Endothelial cell of umbilical vein (primary cell): ENCODE measurements at regions of chrX and their contacts with region 1.

Region 1: DNA sequence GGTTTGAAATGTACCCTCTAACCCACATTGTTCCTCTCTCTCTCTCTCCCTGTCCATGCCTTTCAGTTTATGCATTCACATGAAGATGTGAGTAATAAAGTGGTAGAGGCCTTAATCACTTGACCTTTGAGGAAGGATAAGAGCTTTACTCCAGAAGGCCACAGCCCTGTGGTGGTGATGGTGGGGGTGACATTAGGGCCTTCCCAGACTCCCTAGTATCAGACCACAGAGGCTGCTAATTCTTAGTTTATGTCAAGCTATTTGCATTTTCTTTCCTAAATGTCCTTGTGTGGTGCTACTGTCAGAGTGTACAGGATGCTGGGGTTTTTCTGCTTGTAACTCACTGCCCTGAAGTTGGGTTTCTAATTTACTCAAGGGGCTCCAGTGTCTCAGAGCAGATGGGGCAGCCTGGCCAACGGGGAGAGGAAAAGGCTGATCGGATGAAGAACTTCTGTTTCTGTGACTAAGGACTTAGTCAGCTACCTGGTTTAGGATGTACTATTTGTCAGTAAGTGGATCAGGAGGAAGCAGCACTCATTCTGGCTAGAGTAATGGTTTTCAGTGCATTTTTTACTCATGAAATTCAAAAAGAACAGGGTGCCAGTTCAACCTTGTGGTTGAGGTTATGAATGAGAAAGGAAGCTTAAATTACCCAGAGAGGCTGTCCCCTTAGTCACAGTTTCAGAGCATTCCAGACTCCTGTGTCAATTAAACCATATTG is 509.6 kb upstream of the DIPK2B start:
- DNase-seq: peak; percentile 76
- H3K4me3 ChIP-seq: no peak overlapping the region
- H3K27ac ChIP-seq: peak overlapping the region; percentile 95
- H3K4me1 ChIP-seq: peaks cover 56% of the 10 kb centered on the region
- H3K27me3 ChIP-seq: no peaks in the 10 kb centered on the region
- CTCF ChIP-seq: no peak
- POLR2A ChIP-seq: peak; percentile 46

Region 2: GRCh38 chrX:45196701-45197100 is 513.5 kb before region 1 on chrX:
- CTCF ChIA-PET with region 1: no interaction called
- POLR2A ChIA-PET with region 1: no interaction called
- dilution Hi-C with region 1: no loop called
- intact Hi-C with region 1: loop called (anchors 5 kb)
- DNase-seq: peak; percentile 86
- H3K4me3 ChIP-seq: no peak overlapping the region
- H3K27ac ChIP-seq: peak overlapping the region; percentile 91
- H3K4me1 ChIP-seq: peaks cover 53% of the 10 kb centered on the region
- H3K27me3 ChIP-seq: no peaks in the 10 kb centered on the region
- CTCF ChIP-seq: no peak
- POLR2A ChIP-seq: no peak

Region 3: DNA sequence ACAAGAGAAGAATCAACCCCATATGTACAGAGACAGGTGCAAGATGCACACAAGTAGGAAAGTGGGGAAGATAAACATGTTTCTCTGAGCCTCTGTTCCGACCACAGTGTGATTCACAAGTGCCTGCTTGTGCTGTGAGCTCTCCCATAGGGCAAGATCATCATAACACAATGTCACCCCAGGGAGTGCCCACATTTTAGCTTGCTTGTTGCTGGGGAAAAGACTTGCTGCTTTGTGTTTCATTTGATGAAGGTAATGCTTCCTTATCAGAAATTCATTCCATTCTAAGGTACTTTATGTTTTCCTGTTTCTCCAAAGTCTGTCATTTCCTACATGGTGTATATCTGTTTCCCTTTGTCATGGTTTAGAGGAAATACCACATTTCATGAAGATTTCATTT is 205.0 kb before region 1 on chrX:
- CTCF ChIA-PET with region 1: interaction called, 3 read pairs
- POLR2A ChIA-PET with region 1: no interaction called
- dilution Hi-C with region 1: no loop called
- intact Hi-C with region 1: loop called (anchors 1 kb)
- DNase-seq: peak; percentile 92
- H3K4me3 ChIP-seq: no peak overlapping the region
- H3K27ac ChIP-seq: peak overlapping the region; percentile 96
- H3K4me1 ChIP-seq: peaks cover 35% of the 10 kb centered on the region
- H3K27me3 ChIP-seq: no peaks in the 10 kb centered on the region
- CTCF ChIP-seq: no peak
- POLR2A ChIP-seq: peak; percentile 36

Region 4: DNA sequence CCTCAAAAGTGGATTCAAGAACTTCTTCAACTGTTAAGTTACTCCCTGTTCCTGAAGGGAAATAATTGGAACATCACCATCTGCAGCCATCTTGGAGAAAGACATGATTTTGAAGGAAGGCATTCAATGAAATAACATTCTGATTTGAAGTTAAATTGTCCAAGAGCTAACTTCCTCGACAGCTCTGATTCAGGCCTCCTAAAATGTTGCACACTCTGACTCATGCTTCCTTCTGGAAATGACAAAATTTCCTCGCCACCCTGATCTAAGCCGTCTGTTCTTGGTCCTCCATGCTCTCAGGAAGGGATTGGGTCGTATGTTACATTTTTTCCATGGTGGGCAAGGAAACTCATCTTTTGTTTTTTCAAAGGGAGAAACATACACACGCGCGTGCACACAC is 12.7 kb before region 1 on chrX:
- CTCF ChIA-PET with region 1: interaction called, 13 read pairs
- POLR2A ChIA-PET with region 1: interaction called, 3 read pairs
- dilution Hi-C with region 1: no loop called
- intact Hi-C with region 1: loop called (anchors 1 kb)
- DNase-seq: peak; percentile 94
- H3K4me3 ChIP-seq: no peak overlapping the region
- H3K27ac ChIP-seq: peak overlapping the region; percentile 92
- H3K4me1 ChIP-seq: peaks cover 22% of the 10 kb centered on the region
- H3K27me3 ChIP-seq: no peaks in the 10 kb centered on the region
- CTCF ChIP-seq: no peak
- POLR2A ChIP-seq: no peak

Region 5: GRCh38 chrX:45743081-45743533 is 32.9 kb after region 1 on chrX:
- CTCF ChIA-PET with region 1: interaction called, 11 read pairs
- POLR2A ChIA-PET with region 1: interaction called, 5 read pairs
- dilution Hi-C with region 1: no loop called
- intact Hi-C with region 1: no loop called
- DNase-seq: peak; percentile 61
- H3K4me3 ChIP-seq: no peak overlapping the region
- H3K27ac ChIP-seq: no peak overlapping the region
- H3K4me1 ChIP-seq: no peaks in the 10 kb centered on the region
- H3K27me3 ChIP-seq: no peaks in the 10 kb centered on the region
- CTCF ChIP-seq: peak; percentile 32 to 35
- POLR2A ChIP-seq: peak; percentile 73

Region 6: DNA sequence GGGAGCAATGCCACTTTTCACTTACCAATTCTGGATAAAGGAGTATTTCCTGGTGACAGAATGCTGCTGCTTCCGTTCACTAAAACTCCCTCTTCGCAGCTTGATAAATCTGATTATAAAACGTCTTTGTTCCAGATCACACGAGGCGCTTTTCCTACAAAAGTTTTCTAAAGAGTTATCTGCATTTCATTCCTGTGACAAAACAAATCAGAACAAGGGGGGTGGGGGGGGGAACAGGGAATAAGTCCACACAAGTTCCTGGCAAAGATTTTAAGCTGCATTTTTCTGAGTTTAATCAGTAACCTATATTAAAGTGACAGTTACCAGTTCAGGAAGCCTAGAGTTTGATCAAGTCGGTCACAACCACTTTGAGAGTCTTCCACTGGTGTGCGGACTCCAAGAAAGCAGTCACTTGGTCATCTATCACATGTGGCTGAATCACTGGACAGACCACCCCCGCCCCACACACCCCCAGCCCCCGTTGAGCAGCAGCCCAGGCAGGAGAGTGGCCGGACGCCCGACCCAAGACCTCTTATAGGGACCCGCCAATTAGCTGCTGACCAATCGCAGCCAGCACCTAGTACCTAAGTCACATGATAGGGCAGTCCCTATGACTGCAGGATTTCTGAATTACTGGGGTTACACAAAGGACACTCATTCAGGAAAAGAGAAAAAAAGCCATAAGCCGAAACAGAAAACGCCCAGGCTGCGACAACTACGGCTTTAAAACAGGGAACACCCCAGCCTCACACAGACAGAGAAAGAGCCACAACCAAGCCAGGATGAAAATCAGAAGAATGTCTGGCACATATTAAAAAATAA is 59.7 kb after region 1 on chrX:
- CTCF ChIA-PET with region 1: no interaction called
- POLR2A ChIA-PET with region 1: interaction called, 10 read pairs
- dilution Hi-C with region 1: no loop called
- intact Hi-C with region 1: no loop called
- DNase-seq: peak; percentile 87
- H3K4me3 ChIP-seq: peak overlapping the region; percentile 55 to 100 (median 94)
- H3K27ac ChIP-seq: peak overlapping the region; percentile 87
- H3K4me1 ChIP-seq: peaks cover 40% of the 10 kb centered on the region
- H3K27me3 ChIP-seq: no peaks in the 10 kb centered on the region
- CTCF ChIP-seq: no peak
- POLR2A ChIP-seq: peak; percentile 70